Heart left ventricle (tissue), 16 donors: ENCODE measurements at regions of chrX and their contacts with region 1.

Region 1: DNA sequence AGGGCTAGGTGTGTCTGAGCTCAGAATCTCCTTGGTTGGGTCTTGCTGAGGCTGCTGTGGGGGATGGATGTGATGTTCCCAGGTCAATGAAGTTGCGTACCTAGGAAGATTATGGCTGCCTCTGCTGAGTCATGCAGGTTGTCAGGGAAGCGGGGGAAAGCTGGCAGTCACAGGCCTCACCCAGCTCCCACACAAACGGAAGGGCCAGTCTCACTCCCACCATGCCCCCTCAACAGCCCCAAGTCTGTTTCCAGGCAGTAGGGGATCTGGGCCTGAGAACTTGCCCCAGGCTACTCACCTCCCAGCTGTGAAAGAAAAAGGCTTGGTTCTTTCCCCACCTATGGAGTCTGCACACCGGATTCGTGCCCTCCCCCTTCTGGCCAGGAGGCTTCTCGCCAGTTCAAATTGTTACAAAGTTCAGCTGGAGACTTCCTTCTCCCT is 72.9 kb downstream of the WDR44 start:
- DNase-seq: no peak
- ATAC-seq: no peak
- H3K4me3 ChIP-seq: no peak overlapping the region
- H3K27ac ChIP-seq: no peak overlapping the region
- H3K4me1 ChIP-seq: peaks cover 0 to 10% (median 0%) of the 10 kb centered on the region in 12 donors
- H3K27me3 ChIP-seq: no peaks in the 10 kb centered on the region
- CTCF ChIP-seq: no peak
- POLR2A ChIP-seq: no peak

Region 2: DNA sequence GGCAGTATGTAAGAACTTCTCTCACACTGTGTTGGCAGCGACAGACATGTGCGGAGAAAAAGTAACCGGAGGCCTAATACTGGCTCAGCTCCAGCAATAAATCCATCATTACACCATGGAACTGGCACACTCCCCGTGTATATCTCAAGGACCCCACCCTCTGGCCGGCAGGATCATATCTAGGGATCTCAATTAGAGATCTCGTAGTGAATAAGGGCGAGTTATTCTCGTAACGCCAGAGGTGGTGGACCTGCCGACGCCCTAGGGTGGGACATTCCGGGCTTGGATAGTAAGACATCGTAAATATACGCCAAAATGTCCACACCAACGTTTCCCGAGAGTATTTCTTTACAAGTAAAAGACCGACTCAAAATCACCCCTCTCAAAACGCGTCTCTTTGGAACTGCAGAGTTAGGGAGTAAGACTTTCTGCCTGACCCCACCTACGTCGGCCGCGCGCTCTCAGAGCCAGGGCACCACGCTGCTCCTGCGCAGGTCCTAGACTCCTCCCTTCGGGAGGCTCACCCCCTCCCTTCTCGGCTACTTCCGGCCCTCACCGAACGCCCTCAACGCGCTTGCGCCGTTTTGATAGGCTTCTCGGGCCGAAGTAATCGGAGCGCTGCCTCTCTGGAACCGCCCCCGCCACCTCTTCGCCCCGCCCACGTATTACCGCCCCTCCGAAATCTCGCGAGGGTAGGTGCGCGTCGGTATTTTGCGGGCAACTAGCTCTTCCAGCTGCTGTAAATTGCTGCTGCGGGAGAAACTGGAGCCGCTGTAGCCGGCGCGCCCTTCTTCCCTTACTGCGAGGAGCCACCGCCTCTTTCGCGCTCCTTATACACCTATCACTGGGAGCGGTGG is 73.2 kb before region 1 on chrX and contains the start of gene WDR44:
- intact Hi-C with region 1: loop called in 1 of 10 experiments (anchors 5 kb)
- DNase-seq: peak; percentile 93 to 96 (median 95)
- ATAC-seq: peak; percentile 98 to 99 (median 98)
- H3K4me3 ChIP-seq: peak within 1 kb of the TSS; percentile 49 to 98 (median 78)
- H3K27ac ChIP-seq: peak within 1 kb of the TSS; percentile 82 to 98 (median 92)
- H3K4me1 ChIP-seq: peaks cover 0 to 26% (median 6%) of the 10 kb centered on the region in 12 donors
- H3K27me3 ChIP-seq: no peaks in the 10 kb centered on the region
- CTCF ChIP-seq: no peak
- POLR2A ChIP-seq: peak in 1 of 2 donors; percentile 63
- total RNA-seq, gene WDR44: 9.6 to 18.0 (median 14.5) TPM